ENCODE measurements at regions of chr5 and their contacts with region 1.

Region 1: DNA sequence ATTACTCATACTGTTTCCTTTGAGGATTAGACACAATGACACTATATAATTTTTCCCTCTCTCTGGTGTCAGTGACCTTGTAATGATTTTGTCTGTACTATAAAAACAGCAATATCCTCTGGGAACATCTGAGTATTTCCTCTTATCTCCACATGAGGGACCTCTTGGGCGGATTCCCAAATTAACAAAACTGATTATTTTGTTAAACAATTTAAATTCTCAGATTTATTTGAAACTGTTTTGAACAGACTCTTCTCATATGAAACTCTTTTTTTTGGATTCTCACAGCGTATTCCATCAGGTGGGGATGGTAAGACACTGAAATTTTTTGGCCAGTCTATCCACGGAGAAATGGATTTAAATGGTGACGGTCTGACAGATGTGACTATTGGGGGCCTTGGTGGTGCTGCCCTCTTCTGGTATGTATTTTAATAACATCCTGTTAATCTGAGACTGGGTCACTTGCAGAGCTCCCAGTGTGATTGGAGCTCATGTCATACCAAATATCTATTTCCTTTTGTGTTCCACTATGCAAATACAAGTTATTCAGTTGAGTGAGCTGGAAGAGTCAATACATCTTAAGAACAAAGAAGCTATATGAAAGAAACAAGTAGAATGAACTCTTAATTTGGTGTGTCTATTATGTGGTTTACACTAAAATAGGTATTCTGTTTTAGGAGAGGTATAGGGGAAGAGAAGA is 73.8 kb upstream of the ITGA2 start:
- DNase-seq: no peak
- H3K4me3 ChIP-seq: peak overlapping the region; percentile 32
- CTCF ChIP-seq: peak; percentile 51

Region 2: DNA sequence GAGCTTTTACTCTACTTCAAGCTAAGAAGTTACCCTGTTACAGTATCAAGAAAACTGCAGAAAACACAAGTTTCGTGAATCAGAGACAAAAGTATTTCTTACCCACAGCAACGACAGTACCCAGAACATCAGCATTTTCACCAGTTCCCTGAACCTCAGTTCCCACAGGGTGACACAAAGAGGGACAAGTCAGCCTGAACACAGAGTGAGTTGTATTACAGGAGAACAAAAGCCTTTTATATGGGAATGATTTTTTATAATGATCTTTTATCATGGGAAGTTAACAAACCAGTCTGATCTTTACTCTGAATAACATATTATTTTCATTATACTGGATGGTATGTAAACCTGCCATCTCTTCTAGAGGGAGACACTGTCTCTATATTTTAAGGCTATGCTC is 266.6 kb before region 1 on chr5:
- CTCF ChIA-PET with region 1: no interaction called
- POLR2A ChIA-PET with region 1: no interaction called
- DNase-seq: no peak
- H3K4me3 ChIP-seq: no peak overlapping the region
- CTCF ChIP-seq: no peak

Region 3: GRCh38 chr5:52693280-52693679 is 222.0 kb before region 1 on chr5:
- CTCF ChIA-PET with region 1: interaction called, 29 read pairs
- POLR2A ChIA-PET with region 1: no interaction called
- DNase-seq: no peak
- H3K4me3 ChIP-seq: no peak overlapping the region
- CTCF ChIP-seq: peak; percentile 64

Region 4: DNA sequence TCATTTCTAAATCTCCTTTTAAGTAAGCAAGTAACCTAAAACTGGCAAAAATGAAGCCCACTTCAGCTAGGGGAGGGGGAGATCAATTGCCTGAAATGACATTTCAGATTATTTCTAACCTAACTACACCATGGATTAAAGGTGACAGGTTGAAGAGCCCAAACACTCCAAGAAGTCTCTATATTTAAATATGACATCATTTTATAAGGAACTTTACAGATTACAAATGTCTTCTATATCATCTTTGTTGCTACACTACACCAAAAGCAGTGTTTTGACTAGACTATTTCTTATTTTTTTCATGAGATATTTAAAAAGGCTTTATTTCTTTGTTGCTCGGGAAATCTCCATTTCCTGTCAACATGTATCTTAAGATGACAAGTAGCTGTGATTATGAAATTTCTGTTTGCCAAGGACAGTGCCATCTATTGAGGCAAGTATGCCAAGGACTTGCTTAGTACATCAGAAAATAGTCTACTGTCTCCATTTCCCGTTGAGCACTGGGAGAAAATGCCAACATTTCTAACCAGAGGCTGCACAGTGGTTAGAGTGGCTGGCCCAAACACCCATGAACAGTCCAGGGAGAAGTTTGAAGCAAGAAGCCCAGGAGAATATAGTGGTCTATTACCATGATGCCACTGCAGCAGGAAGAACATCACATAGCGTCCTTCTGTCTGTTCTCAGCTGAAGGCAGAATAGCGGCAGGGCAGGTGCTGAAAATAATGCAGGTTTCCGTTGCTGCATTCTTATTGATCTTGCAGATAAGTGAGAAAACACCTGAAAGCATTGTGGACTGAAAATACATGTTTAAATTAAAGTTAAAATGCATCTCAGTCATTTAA is 19.5 kb before region 1 on chr5:
- CTCF ChIA-PET with region 1: interaction called, 83 read pairs
- POLR2A ChIA-PET with region 1: no interaction called
- DNase-seq: no peak
- H3K4me3 ChIP-seq: no peak overlapping the region
- CTCF ChIP-seq: no peak

Region 5: GRCh38 chr5:53095931-53096525 is 180.7 kb after region 1 on chr5:
- CTCF ChIA-PET with region 1: interaction called, 22 read pairs
- POLR2A ChIA-PET with region 1: no interaction called
- DNase-seq: no peak
- H3K4me3 ChIP-seq: no peak overlapping the region
- CTCF ChIP-seq: peak; percentile 65

Measured in AG04449 (cell line).